Aorta (tissue), 5 donors: ENCODE measurements at regions of chr6 and their contacts with region 1.

Region 1: GRCh38 chr6:128731249-128732165 is 151.4 kb upstream of the LAMA2 start:
- DNase-seq: no peak
- ATAC-seq: peak; percentile 65
- H3K4me3 ChIP-seq: no peak overlapping the region
- H3K27ac ChIP-seq: no peak overlapping the region
- H3K4me1 ChIP-seq: peaks cover 0 to 3% of the 10 kb centered on the region in 2 donors
- H3K27me3 ChIP-seq: no peaks in the 10 kb centered on the region

Region 2: DNA sequence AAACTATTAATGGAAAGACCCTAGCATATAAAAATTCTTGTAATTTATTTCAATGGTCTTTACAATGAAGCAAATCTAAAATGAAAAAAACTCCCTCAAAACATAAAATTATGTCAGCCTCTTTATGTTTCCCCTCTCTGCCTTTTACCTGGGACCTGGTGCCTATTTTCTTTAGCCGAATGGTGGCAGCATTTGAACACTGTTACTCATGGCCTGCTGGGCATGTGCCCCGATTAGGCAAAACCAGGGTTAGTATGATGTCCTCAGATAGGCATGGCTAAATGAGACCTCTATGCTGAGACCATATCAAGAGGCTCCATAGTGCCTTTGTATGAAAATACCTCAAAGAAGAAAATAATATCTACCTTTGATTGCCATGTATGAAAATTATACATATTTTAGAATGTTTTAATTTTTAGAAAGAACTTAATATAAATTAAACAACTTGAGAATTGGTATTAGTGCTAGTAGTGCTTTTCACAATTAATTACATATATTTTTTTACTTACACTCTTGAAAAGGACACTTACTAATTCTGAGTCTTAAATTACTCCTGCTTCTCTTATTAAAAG is 1177.0 kb before region 1 on chr6:
- intact Hi-C with region 1: loop called in 1 of 2 experiments (anchors 10 kb)
- DNase-seq: no peak
- ATAC-seq: no peak
- H3K4me3 ChIP-seq: no peak overlapping the region
- H3K27ac ChIP-seq: no peak overlapping the region
- H3K4me1 ChIP-seq: peaks cover 0 to 2% of the 10 kb centered on the region in 2 donors
- H3K27me3 ChIP-seq: no peaks in the 10 kb centered on the region

Region 3: GRCh38 chr6:127737009-127737486 is 994.5 kb before region 1 on chr6:
- intact Hi-C with region 1: loop called (anchors 10 kb)
- DNase-seq: no peak
- ATAC-seq: peak; percentile 69
- H3K4me3 ChIP-seq: no peak overlapping the region
- H3K27ac ChIP-seq: no peak overlapping the region
- H3K4me1 ChIP-seq: no peaks in the 10 kb centered on the region
- H3K27me3 ChIP-seq: no peaks in the 10 kb centered on the region

Region 4: DNA sequence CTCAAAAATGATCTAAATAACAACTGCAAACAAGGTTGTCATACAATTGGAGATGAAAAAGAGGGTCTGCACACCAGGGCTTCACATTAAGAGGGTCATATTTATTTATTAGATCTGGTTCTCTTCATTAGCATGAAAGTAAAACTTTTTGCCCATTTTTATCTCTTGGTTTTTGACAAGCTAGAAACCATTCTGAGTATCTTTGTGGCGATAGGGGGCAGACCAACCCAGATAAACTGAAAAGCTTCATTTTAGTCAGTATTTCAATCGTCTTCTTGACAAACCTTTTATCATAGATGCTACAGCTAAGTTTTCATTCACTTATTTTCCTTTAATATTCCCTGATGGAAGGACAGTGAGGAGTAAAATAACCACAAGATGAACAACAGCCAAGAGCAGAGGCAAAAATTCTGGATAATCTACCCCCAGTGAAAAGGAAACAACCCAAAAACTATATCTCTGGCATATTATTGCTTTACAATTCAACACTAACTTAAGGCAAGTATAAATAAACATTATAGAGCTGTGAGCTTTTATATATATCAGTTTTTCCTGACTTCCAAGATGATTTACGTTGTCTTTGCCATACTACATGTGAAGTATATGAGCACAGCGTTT is 875.9 kb before region 1 on chr6:
- intact Hi-C with region 1: loop called in 1 of 2 experiments (anchors 10 kb)
- DNase-seq: no peak
- ATAC-seq: no peak
- H3K4me3 ChIP-seq: no peak overlapping the region
- H3K27ac ChIP-seq: no peak overlapping the region
- H3K4me1 ChIP-seq: no peaks in the 10 kb centered on the region
- H3K27me3 ChIP-seq: no peaks in the 10 kb centered on the region

Region 5: DNA sequence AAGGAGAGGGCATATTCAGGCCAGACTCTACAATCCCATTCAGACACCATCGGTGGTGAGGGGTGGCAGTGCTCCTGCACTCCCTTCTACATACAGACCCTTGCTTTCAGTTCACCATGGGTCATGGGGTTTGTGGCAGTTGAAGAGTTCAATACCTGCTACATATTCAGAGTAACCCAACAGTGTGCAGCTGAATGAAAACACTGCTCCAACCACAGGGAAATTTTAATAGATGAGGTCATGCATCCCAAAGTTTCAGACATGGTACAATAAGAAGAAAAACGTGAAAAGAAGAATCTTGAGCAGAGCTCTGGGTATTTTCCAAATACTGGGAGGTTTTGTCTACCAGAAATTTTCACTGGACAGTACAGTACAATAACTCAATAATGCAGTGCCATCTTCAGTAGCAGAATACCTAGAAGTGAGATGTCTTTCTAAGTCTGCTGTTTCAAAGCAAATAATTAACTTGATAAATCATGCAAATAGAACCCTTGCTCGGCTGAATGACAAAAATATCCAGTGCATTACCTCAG is 373.2 kb before region 1 on chr6:
- intact Hi-C with region 1: no loop called
- DNase-seq: no peak
- ATAC-seq: no peak
- H3K4me3 ChIP-seq: no peak overlapping the region
- H3K27ac ChIP-seq: no peak overlapping the region
- H3K4me1 ChIP-seq: peaks cover 0 to 3% of the 10 kb centered on the region in 2 donors
- H3K27me3 ChIP-seq: no peaks in the 10 kb centered on the region

Region 6: GRCh38 chr6:128694303-128695009 is 37.1 kb before region 1 on chr6:
- intact Hi-C with region 1: no loop called
- DNase-seq: no peak
- ATAC-seq: no peak
- H3K4me3 ChIP-seq: no peak overlapping the region
- H3K27ac ChIP-seq: no peak overlapping the region
- H3K4me1 ChIP-seq: no peaks in the 10 kb centered on the region
- H3K27me3 ChIP-seq: no peaks in the 10 kb centered on the region